Left cardiac atrium (tissue), 4 donors: ENCODE measurements at regions of chr13 and their contacts with region 1.

Region 1: DNA sequence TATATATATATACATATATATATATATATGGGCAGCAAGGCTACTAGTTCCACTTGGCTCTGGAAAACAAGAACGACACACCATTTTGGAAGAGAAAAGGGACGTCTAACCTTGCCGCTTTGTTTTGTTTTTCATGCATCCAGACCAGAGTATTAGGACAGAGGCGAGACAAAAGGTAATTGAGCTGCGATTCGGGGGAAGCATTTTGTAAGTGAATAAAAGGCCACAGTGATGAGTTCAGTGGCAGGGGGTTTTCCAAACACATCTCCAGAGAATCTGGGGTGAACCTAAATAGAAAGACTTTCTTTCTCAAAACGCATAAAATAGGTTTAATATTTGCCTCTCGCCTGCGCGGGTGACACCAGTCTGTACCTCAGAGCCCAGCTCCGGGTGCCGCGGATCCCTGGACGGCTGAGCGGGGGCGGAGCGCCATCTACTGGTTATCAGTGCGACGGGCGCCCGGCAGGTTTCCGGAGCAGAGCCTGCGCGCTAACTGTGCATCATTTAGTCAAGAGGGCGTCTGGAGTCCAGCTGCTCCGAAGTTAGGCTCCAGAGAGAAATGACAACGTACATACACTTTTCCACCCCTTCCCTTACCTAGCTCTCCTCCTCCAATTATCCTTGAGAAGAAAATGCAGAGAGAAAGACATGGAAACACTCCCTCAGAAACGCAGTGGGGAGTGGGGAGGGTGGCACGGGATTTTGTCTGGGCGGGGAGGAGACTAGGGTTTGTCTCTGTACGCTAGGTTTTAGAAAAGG is 262.3 kb downstream of the TBC1D4 start:
- DNase-seq: peak; percentile 83
- ATAC-seq: peak; percentile 93 to 97

Region 2: GRCh38 chr13:73835138-73835721 is 1384.4 kb before region 1 on chr13:
- intact Hi-C with region 1: loop called in 1 of 2 experiments (anchors 10 kb)
- DNase-seq: no peak
- ATAC-seq: no peak

Region 3: GRCh38 chr13:75271846-75272245 is 52.2 kb after region 1 on chr13:
- intact Hi-C with region 1: no loop called
- DNase-seq: no peak
- ATAC-seq: no peak

Region 4: GRCh38 chr13:75365724-75366173 is 146.1 kb after region 1 on chr13:
- intact Hi-C with region 1: no loop called
- DNase-seq: no peak
- ATAC-seq: peak; percentile 46 to 61